MCF 10A (cell line): ENCODE measurements at regions of chr1 and their contacts with region 1.

Region 1: DNA sequence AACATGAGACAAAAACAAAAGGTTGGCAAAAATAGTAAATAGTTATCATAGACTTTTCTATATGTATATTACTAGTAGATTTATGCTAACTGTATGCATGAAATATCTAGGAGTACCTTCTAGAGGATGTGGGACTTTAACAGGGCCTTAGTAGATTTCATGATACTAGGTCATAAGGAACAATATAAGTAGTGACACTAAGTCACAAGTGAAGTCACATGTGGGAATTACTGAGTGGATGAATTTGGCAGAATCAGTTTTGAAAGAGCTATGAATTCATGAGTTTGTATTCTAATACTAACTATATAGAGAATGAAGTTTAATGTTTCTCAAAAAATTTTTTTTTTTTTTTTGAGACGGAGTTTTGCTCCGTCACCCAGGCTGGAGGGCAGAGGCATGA is 53.1 kb upstream of the GPR25 start:
- DNase-seq: no peak
- H3K4me3 Mint-ChIP-seq: no peak overlapping the region
- H3K27ac Mint-ChIP-seq: peak overlapping the region; percentile 33
- H3K4me1 Mint-ChIP-seq: peaks cover 11% of the 10 kb centered on the region
- H3K27me3 Mint-ChIP-seq: no peaks in the 10 kb centered on the region
- CTCF ChIP-seq: no peak

Region 2: GRCh38 chr1:200837931-200838571 is 18.3 kb after region 1 on chr1:
- CTCF ChIA-PET with region 1: interaction called, 6 read pairs
- POLR2A ChIA-PET with region 1: interaction called, 11 read pairs
- intact Hi-C with region 1: no loop called
- DNase-seq: peak; percentile 45
- H3K4me3 Mint-ChIP-seq: no peak overlapping the region
- H3K27ac Mint-ChIP-seq: no peak overlapping the region
- H3K4me1 Mint-ChIP-seq: peaks cover 16% of the 10 kb centered on the region
- H3K27me3 Mint-ChIP-seq: no peaks in the 10 kb centered on the region
- CTCF ChIP-seq: peak; percentile 67